HEK293 (cell line): ENCODE measurements at regions of chr1 and their contacts with region 1.

Region 1: GRCh38 chr1:239951511-239952140 is 140.1 kb upstream of the FMN2 start:
- H3K4me3 ChIP-seq: no peak overlapping the region
- H3K27ac ChIP-seq: no peak overlapping the region
- H3K4me1 ChIP-seq: no peaks in the 10 kb centered on the region
- CTCF ChIP-seq: peak; percentile 64

Region 2: GRCh38 chr1:239008568-239008967 is 943.1 kb before region 1 on chr1:
- CTCF ChIA-PET with region 1: no interaction called
- POLR2A ChIA-PET with region 1: no interaction called
- H3K4me3 ChIP-seq: no peak overlapping the region
- H3K27ac ChIP-seq: no peak overlapping the region
- H3K4me1 ChIP-seq: no peaks in the 10 kb centered on the region
- CTCF ChIP-seq: no peak

Region 3: DNA sequence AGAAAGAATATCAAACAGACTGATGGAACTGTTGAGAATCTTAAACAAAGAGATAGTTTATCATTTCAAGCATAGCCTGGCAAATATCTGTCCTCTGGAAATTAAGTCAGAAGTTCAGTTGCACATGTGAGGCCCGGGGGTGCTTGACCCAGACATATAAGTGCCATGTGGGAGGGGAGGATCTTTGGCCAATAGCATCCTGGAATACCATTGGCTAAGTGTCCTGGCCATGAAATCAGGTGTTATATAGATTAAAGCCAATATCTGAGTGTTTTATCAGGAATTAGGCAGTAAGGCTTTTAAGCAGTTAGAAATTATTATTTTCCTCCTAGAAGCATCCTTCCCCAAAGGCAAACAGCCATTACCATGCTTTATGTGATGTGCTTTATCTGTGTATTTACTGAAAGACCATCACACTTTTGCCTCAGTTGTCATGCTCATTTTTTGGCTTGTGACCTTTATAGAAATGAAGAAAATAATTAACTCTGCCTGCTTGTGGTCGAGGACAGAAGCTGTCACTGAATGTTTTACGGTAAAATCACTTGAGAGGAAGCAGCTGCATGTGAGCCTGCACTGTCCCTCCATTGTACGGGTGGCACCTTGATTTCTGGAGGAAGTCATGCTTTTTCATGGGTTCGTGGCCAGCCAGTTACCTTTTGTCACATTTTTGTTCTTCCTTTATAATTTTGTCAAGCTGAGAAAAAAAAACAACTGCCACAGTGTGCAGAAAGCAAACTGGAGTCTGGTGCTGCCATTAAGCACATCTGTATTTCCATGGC is 119.9 kb before region 1 on chr1:
- CTCF ChIA-PET with region 1: no interaction called
- POLR2A ChIA-PET with region 1: no interaction called
- H3K4me3 ChIP-seq: no peak overlapping the region
- H3K27ac ChIP-seq: no peak overlapping the region
- H3K4me1 ChIP-seq: no peaks in the 10 kb centered on the region
- CTCF ChIP-seq: no peak

Region 4: GRCh38 chr1:239930686-239931262 is 20.9 kb before region 1 on chr1:
- CTCF ChIA-PET with region 1: interaction called, 12 read pairs
- POLR2A ChIA-PET with region 1: no interaction called
- H3K4me3 ChIP-seq: no peak overlapping the region
- H3K27ac ChIP-seq: no peak overlapping the region
- H3K4me1 ChIP-seq: peaks cover 2% of the 10 kb centered on the region; the same call in 1 of the 2 replicates
- CTCF ChIP-seq: no peak

Region 5: DNA sequence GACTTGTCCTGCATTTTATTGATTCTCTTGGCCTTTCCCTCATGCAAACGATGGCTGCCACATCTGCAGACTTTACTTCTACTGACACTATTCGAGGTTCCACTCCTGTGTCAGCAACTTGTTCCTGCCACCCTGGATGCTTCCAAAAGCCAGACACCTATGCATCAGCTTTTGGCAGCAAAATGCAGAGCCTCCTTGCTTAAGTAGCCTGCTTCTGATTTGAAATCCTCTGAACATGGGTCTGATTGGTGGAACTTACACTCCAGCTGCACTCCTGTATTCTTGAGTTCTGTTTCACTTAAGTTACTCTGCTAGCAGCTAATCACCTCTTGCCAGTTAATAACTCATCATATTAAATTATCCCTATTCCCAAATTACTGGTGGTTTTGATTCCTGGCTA is 12.0 kb before region 1 on chr1:
- CTCF ChIA-PET with region 1: interaction called, 51 read pairs
- POLR2A ChIA-PET with region 1: no interaction called
- H3K4me3 ChIP-seq: no peak overlapping the region
- H3K27ac ChIP-seq: no peak overlapping the region
- H3K4me1 ChIP-seq: no peaks in the 10 kb centered on the region
- CTCF ChIP-seq: no peak

Region 6: GRCh38 chr1:239976130-239976968 is 24.7 kb after region 1 on chr1:
- CTCF ChIA-PET with region 1: interaction called, 187 read pairs
- POLR2A ChIA-PET with region 1: no interaction called
- H3K4me3 ChIP-seq: no peak overlapping the region
- H3K27ac ChIP-seq: no peak overlapping the region
- H3K4me1 ChIP-seq: no peaks in the 10 kb centered on the region
- CTCF ChIP-seq: peak; percentile 54

Region 7: DNA sequence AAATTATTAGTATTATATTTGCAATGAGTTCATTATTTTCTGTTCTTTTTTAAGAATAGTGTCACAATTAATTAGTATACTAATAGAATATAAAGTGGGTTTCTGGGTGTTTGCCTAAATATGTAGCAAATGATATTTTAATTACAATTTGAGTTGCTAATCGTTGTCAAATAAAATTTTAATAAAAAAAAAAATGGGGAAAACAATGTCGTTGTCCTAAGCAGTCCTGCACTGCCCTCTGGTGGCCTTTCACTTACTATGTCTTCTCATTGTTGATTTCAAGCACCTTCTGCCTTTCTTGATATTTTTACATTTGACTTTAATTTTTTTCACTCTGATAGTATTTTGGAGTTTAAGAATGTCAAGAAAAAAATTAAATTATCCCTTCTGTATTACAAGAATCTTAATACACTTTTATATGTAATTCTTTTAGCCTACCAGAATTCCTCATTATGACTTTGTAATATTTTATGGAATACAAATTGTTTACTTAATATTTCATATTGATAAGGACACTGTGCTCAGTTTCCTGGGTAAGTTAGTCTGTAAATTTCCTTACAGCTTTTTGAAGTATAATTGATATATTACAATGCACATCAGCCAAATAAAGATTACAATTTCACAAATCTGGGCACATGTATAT is 35.6 kb after region 1 on chr1:
- CTCF ChIA-PET with region 1: interaction called, 110 read pairs
- POLR2A ChIA-PET with region 1: no interaction called
- H3K4me3 ChIP-seq: no peak overlapping the region
- H3K27ac ChIP-seq: no peak overlapping the region
- H3K4me1 ChIP-seq: no peaks in the 10 kb centered on the region
- CTCF ChIP-seq: peak; percentile 35

Region 8: DNA sequence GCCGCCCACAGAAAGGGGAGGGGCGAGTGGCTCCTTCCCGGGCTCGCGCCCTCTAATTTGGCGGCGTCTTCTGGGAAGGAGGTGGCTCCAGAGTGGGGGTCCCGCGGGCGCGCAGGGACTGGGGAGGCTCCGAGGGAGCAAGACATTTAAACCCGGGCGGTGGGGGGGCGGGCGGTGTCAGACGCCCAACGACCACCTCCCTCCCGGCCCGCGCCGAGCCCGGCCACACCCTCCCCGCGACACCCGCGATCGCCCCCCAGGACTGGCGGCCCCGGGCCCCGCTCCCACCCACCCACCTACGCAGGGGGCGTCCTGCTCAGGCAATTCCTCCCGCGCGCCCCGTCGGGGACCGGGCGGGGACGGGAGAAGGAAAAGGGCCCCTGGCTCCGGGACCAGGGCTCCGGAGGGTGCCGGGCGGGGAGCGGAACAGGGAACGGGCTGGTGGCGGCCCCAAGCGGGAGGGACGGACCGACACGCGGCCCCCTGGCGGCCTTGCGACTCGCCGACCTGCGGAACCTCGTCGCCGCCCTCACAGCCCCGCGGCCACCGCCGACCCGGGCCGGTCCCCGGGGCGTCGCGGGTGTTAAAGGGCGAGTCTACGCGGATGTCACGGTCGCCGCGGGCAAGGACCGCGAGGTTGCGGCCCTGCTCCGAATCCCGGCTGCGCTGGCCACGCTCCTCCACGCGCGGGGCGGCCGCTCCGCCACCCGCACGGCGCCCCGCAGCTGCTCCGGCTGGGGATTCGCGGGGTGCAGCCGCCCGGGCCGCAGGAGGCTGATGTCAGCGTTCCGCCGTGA is 46.1 kb after region 1 on chr1:
- CTCF ChIA-PET with region 1: interaction called, 62 read pairs
- POLR2A ChIA-PET with region 1: no interaction called
- H3K4me3 ChIP-seq: peak overlapping the region; percentile 48
- H3K27ac ChIP-seq: peak overlapping the region; percentile 42; the same call in 1 of the 2 replicates
- H3K4me1 ChIP-seq: peaks cover 6% of the 10 kb centered on the region
- CTCF ChIP-seq: peak; percentile 87

Region 9: DNA sequence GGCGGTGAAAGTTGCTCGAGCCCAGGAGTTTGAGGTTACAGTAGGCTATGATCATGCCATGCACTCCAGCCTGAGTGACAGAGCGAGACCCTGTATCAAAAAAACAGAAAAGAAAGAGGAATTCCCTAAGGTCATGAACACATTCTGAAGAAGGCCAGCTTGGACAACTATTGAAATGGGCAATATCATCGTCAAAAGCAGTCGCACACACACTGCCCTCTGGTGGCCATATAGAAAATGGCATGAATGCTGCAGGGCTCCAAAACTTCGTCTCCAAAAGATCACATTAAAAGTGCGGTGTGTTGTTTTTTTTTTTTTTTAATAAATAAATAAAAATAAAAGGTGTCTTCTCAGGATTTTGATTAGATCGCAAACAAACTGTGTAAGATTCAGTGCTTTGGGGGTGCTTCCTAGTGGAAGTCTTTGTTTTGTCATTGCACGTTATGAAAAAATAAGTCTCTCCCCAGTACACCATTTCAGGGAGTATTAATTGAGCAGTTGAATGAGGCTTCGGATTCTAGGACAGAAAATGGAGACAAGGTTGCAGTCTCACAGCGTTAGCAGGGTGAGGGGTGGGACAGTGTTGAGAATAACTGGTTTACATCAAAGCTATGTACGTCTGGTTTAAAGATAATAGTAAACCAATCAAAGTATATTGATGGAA is 52.6 kb after region 1 on chr1:
- CTCF ChIA-PET with region 1: interaction called, 62 read pairs
- POLR2A ChIA-PET with region 1: no interaction called
- H3K4me3 ChIP-seq: no peak overlapping the region
- H3K27ac ChIP-seq: no peak overlapping the region
- H3K4me1 ChIP-seq: peaks cover 6% of the 10 kb centered on the region
- CTCF ChIP-seq: 0 out of 2 replicates have a peak, but pooled peaks have one; percentile 60

Region 10: GRCh38 chr1:240073097-240073496 is 121.5 kb after region 1 on chr1:
- CTCF ChIA-PET with region 1: no interaction called
- POLR2A ChIA-PET with region 1: no interaction called
- H3K4me3 ChIP-seq: no peak overlapping the region
- H3K27ac ChIP-seq: no peak overlapping the region
- H3K4me1 ChIP-seq: no peaks in the 10 kb centered on the region
- CTCF ChIP-seq: no peak